Panc1 (cell line): ENCODE measurements at regions of chr4 and their contacts with region 1.

Region 1: GRCh38 chr4:112431158-112431557 is 84.8 kb downstream of the NEUROG2 start:
- DNase-seq: no peak
- ATAC-seq: no peak
- H3K4me3 ChIP-seq: no peak overlapping the region
- H3K27ac ChIP-seq: no peak overlapping the region
- H3K4me1 ChIP-seq: no peaks in the 10 kb centered on the region
- H3K27me3 ChIP-seq: no peaks in the 10 kb centered on the region
- CTCF ChIP-seq: no peak

Region 2: DNA sequence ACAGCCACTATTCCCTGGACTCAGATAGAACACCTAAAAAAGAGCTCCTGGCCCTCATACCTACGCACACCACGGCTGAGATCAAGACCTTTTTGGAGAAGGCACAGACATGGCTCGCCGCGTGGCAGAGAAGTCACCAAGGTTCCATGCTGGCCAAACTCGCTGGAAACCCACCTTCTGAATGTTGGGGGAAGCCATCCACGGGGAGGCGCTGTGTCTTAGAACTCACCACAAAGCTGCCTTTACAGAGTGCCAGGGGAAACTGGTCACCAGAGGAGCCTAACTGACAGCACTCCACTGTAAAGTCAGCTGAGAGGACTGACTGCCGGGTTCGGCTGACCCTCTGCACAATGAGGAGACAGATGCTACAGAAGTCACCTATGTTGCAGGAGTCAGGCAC is 13.1 kb before region 1 on chr4:
- CTCF ChIA-PET with region 1: no interaction called
- POLR2A ChIA-PET with region 1: no interaction called
- in situ Hi-C with region 1: no loop called
- intact Hi-C with region 1: no loop called
- DNase-seq: no peak
- ATAC-seq: no peak
- H3K4me3 ChIP-seq: no peak overlapping the region
- H3K27ac ChIP-seq: no peak overlapping the region
- H3K4me1 ChIP-seq: no peaks in the 10 kb centered on the region
- H3K27me3 ChIP-seq: no peaks in the 10 kb centered on the region
- CTCF ChIP-seq: no peak

Region 3: DNA sequence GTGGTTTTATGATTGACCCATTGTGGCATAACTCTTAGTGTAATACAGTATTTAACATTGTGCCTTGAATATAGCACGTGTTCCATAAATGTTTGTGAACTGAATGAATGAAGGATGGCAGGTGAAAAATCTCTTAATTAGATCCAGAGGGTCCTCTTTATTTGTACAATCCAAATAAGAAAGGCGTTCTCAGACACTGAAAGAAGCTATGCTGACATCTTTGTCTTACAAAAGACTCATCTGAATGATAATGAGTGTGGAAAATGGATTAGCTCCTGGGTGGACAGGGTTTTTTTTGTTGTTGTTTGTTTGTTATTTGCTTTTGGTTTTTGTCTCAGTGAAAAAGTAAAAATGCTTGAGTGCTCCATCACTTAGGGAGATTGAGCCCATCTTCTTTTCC is 22.2 kb after region 1 on chr4:
- CTCF ChIA-PET with region 1: no interaction called
- POLR2A ChIA-PET with region 1: no interaction called
- in situ Hi-C with region 1: no loop called
- intact Hi-C with region 1: loop called (anchors 1 kb)
- DNase-seq: no peak
- ATAC-seq: no peak
- H3K4me3 ChIP-seq: no peak overlapping the region
- H3K27ac ChIP-seq: no peak overlapping the region
- H3K4me1 ChIP-seq: no peaks in the 10 kb centered on the region
- H3K27me3 ChIP-seq: no peaks in the 10 kb centered on the region
- CTCF ChIP-seq: no peak

Region 4: GRCh38 chr4:112677519-112678091 is 246.4 kb after region 1 on chr4:
- CTCF ChIA-PET with region 1: no interaction called
- POLR2A ChIA-PET with region 1: no interaction called
- in situ Hi-C with region 1: no loop called
- intact Hi-C with region 1: no loop called
- DNase-seq: no peak
- ATAC-seq: no peak
- H3K4me3 ChIP-seq: no peak overlapping the region
- H3K27ac ChIP-seq: no peak overlapping the region
- H3K4me1 ChIP-seq: no peaks in the 10 kb centered on the region
- H3K27me3 ChIP-seq: no peaks in the 10 kb centered on the region; the same call in 1 of the 2 replicates
- CTCF ChIP-seq: no peak